ENCODE measurements at regions of chr5 and their contacts with region 1.

Region 1: DNA sequence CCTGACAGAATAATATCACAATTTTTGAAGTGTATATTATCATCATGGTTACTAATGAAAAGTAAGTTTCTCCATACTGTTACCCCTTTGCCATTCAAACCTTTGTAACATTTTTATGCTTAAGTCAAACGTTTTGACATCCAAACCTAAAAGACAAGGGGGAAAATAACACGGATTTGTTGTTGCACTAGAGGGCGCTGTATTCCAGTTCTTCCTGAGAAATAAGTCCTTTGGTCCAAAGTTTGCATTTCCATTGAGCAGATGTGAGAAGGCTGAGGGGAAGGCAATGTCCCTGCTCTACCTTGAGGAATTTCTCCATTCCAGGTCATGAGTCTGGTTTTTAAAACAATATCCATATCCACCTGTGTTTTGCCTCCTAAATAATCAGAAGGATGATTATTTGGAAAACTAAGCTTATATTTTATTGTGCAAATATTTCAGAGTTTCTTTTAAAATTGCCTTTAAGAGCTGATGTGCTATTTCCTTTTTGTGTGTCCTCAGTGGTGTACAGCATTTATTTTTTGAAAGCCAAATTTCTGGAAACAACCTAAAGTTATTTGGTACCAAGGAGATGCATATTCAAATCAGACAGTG is 9.7 kb downstream of the LECT2 start:
- DNase-seq: no peak

Region 2: DNA sequence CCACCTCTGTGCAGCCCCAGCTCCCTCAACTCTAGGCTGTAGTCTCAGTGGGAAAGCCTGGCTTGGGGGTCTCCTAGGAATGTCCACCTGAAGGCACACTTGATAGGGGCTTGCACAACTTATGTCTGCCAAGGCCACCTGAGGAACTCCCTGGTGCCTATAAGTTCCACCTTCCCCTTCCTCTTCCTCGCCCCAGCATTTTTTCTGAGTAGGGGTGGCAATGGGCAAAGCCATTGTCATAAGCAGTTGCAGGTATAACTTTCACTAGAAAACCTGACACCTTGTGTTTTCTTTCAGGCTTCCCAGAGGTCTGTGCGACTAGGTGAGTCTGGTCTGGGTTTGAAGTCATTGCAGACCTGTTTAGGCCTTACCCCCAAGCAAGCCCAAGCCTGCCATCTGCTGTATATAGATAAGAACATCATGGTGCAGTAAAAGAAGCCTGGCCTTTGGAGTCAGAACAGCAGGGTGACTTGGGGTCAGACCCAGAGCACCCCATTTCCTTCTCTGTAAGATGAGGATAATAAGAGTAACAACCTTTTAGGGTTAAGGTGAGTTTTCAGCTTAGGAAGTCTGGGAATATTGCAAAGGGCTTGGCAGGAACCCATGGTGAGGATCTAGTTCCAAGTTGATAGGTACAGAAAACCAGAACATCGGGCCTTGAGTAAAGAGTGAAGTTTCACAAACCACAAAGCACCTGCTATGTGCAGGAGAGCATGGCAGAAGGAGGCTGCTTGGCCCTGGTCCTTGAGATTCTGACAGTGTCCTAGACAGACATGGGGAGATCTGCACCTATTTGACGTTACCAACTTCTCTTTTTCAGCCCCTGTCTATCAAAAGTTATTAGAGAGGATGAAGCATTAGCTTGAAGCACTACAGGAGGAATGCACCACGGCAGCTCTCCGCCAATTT is 117.6 kb after region 1 on chr5:
- intact Hi-C with region 1: loop called (anchors 2 kb)
- DNase-seq: no peak

Region 3: DNA sequence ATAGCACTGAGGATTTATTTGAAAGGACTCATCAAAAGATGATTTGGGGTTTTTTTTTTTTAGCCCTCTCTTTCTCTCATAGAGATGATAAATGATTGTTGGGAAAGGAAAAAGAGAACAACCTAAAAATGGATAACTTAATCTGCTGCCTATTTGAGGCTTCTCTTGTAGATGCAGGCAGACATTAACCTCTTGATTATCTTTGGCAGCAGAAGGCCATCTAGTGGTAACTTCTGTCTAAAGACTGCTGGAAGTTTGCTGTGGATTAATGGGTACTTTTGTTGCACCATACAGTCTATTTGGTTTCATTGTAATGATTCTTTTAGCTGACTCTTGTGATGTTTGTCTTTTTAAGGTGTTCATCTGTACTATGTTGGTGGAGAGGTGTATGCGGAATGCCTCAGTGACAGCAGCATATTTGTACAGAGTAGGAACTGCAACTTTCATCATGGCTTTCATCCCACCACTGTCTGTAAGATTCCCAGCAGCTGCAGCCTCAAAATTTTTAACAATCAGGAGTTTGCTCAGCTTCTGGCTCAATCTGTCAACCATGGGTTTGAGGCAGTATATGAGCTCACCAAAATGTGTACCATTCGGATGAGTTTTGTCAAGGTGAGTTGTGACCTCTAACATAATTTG is 229.1 kb after region 1 on chr5:
- intact Hi-C with region 1: loop called (anchors 5 kb)
- DNase-seq: no peak

Region 4: GRCh38 chr5:136212252-136212721 is 267.2 kb after region 1 on chr5:
- intact Hi-C with region 1: loop called (anchors 5 kb)
- DNase-seq: no peak

Region 5: DNA sequence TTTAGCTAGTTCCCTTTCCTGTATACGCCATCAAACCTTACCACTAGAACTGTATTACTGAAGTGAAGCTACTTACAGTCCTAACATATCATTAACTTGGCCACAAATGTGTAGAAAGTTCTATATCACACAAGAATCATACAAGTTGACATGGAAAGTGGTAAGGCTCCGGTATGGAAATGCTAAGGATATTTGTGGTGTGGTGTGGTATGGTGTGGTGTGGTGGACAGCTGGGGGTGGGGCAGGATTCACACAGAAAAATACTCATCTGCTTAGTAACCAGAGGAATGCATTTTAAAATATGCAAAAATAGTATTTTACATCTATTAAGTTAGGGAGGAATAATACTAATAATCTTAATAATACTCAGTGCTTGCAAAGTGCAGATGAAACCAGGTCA is 350.9 kb after region 1 on chr5:
- intact Hi-C with region 1: no loop called
- DNase-seq: no peak

Measured in cardiac septum (tissue), 1 donor.